HCT116 (cell line): ENCODE measurements at regions of chr3 and their contacts with region 1.

Region 1: DNA sequence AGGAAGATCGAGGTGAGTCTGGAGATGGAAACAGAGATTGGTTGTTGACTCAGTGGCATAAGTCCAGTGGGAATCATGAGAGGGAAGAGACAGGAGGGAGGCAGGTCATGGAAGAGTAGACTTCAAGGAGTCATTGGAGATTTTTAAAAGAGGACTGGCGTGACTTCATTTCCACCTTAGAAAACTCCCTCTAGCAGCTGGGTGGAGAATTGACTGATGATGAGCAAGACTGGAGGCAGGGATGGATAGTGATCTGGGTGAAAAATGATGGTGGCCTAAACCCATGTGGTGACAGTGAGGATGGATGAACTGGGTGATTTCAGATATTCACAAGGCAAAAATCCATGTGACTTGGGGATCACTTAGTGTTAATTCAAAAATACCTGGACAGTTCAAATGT is 23.1 kb upstream of the CPNE4 start:
- DNase-seq: no peak
- ATAC-seq: peak; percentile 25; the same call in 1 of the 2 replicates
- H3K4me3 ChIP-seq: no peak overlapping the region
- H3K27ac ChIP-seq: no peak overlapping the region
- H3K4me1 ChIP-seq: no peaks in the 10 kb centered on the region
- H3K27me3 ChIP-seq: peaks cover 7% of the 10 kb centered on the region; the same call in 1 of the 2 replicates
- CTCF ChIP-seq: 0 out of 6 replicates have a peak, but pooled peaks of 1 of the 3 experiments have one; percentile 12
- POLR2A ChIP-seq: no peak
- RAD21 ChIP-seq: no peak

Region 2: GRCh38 chr3:131880948-131881347 is 177.0 kb before region 1 on chr3:
- CTCF ChIA-PET with region 1: no interaction called
- POLR2A ChIA-PET with region 1: no interaction called
- RAD21 ChIA-PET with region 1: no interaction called
- intact Hi-C with region 1: no loop called
- DNase-seq: no peak
- ATAC-seq: no peak
- H3K4me3 ChIP-seq: no peak overlapping the region
- H3K27ac ChIP-seq: no peak overlapping the region
- H3K4me1 ChIP-seq: no peaks in the 10 kb centered on the region
- H3K27me3 ChIP-seq: peaks cover 21% of the 10 kb centered on the region
- CTCF ChIP-seq: no peak
- POLR2A ChIP-seq: no peak
- RAD21 ChIP-seq: no peak

Region 3: GRCh38 chr3:131988209-131988608 is 69.7 kb before region 1 on chr3:
- CTCF ChIA-PET with region 1: no interaction called
- POLR2A ChIA-PET with region 1: no interaction called
- RAD21 ChIA-PET with region 1: no interaction called
- intact Hi-C with region 1: loop called (anchors 2 kb)
- DNase-seq: no peak
- ATAC-seq: no peak
- H3K4me3 ChIP-seq: no peak overlapping the region
- H3K27ac ChIP-seq: no peak overlapping the region
- H3K4me1 ChIP-seq: no peaks in the 10 kb centered on the region
- H3K27me3 ChIP-seq: no peaks in the 10 kb centered on the region
- CTCF ChIP-seq: no peak
- POLR2A ChIP-seq: no peak
- RAD21 ChIP-seq: no peak